Pancreas (tissue), 10 donors: ENCODE measurements at regions of chr2 and their contacts with region 1.

Region 1: DNA sequence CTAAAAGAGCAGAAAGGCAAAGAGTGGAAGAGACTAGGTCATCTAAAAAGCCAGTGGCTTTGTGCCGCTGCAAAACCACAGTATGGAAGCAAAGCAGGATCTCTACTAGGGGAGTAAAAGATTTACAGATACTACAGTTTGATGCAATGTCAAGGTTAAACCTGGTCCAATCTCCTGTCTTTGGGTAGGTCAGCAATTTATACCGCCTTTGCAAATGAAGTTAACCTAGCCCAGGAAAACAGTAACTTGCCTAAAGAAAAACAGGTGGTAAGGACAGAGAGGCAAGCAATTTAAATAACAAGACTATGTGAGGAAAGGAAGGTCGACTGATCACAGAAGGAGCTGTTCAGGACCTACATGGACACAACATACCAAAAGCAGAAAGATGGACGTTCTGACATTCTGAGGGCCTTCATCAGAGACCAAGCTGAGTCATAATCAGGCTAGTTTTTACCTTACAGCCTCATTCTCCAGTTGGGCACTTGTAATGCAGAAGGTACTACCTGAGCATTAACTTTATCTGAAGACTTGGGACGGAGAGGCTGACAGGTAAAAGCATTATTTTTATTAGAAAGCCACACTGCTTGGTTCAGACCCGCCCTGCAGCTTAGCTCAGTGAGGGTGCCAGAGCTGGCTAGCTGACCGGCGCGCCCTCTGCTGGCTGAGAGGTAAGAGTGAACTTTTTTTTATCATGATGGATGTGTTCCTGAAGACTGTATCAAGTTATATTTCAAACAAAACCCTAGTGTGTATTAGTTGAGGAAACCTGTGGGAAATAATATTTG is 15.9 kb downstream of the CDKL4 start:
- DNase-seq: peak; percentile 49 to 89 (median 76)
- ATAC-seq: peak; percentile 86 to 98 (median 96)
- H3K4me3 ChIP-seq: no peak overlapping the region
- H3K27ac ChIP-seq: no peak overlapping the region
- H3K4me1 ChIP-seq: no peaks in the 10 kb centered on the region
- H3K27me3 ChIP-seq: no peaks in the 10 kb centered on the region
- CTCF ChIP-seq: peak; percentile 64 to 85 (median 77)

Region 2: DNA sequence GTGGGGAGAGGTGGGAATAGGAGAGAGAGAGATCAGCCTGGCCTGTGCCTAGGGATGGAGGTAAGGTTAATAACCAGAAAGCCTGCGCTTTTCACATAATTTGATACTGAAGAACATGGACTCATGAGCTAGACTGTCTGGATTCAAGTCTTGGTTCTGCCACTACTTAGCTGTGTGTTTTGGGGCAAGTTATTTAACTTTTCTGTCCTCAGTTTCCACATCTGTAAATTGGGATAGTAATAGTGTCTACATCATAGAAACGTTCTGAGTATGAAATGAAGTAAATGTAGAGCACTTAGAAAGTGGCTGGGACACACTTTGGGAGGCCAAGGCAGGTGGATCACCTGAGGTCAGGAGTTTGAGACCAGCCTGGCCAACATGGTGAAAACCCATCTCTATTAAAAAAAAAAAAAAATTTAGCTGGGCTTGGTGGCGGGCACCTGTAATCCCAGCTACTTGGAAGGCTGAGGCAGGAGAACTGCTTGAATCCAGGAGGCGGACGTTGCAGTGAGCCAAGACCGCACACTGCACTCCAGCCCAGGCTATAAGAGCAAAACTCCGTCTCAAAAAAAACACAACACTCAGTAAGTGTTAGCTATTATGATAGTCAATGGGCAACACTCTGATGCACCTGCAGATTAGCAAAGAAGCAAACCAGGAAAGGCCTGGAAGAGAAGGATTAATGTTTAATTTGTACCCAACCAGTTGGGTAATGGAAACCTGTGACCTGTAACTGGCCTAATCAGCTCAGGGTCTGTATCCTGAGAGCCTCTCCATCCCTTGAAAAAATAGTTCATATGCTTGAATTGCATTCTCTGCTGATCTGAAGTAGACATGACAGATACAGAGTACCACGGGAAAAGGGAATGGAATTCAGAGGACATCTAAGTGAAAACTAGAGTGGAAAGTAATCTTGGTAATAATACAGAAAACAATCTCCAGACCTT is 555.1 kb before region 1 on chr2:
- intact Hi-C with region 1: no loop called
- DNase-seq: no peak
- ATAC-seq: no peak
- H3K4me3 ChIP-seq: no peak overlapping the region
- H3K27ac ChIP-seq: no peak overlapping the region
- H3K4me1 ChIP-seq: peaks cover 0 to 14% (median 14%) of the 10 kb centered on the region in 3 donors
- H3K27me3 ChIP-seq: no peaks in the 10 kb centered on the region
- CTCF ChIP-seq: no peak

Region 3: DNA sequence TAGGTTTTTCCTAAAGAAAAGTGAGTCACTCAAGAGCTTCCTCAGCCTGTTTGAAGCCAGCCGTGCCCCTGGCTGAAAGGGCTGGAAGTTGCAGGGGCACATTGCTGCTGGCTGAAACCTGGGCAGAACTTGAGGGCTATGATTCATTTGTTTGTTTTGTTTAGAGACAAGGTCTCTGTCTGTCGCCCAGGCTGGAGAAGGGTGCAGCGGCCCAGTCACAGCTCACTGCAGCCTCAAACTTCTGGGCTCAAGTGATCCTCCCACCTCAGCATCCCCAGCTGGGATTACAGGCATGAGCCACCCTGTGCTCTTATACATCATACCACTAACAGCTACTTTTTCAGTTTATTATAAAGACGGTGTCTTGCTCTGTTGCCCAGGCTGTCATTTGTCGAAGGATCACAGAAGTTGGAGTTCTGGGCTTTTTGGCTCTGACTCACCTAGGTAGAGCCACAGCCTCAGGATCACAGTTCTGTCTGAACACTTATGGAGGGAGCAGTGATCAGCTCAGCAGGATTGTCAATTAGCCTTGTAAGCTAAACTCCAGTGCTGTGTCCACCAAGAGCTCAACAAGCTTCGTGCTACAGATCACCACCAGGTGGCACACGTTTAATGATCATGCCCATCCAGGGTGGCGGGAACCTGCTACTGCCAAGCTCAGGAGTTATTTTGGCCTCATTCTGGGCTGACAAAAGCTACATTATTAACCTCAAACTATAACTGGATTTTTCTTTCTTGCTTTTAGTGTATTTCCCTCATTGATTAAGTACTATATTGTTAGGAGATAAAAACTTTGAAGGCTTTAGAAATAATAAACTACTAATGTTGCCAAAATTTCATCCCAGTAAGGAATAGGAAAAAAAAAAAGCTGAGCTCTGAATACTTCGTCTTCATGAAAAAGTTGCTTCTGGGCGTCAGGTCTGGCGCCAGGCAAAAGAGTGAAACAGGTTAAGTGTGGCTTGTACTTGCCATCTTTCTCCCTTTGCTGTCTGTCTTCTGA is 280.3 kb before region 1 on chr2:
- intact Hi-C with region 1: loop called in 1 of 3 experiments (anchors 5 kb)
- DNase-seq: peak; percentile 52 to 73 (median 60)
- ATAC-seq: peak; percentile 78 to 98 (median 96)
- H3K4me3 ChIP-seq: no peak overlapping the region
- H3K27ac ChIP-seq: no peak overlapping the region
- H3K4me1 ChIP-seq: no peaks in the 10 kb centered on the region
- H3K27me3 ChIP-seq: no peaks in the 10 kb centered on the region
- CTCF ChIP-seq: peak; percentile 48 to 69 (median 58)

Region 4: DNA sequence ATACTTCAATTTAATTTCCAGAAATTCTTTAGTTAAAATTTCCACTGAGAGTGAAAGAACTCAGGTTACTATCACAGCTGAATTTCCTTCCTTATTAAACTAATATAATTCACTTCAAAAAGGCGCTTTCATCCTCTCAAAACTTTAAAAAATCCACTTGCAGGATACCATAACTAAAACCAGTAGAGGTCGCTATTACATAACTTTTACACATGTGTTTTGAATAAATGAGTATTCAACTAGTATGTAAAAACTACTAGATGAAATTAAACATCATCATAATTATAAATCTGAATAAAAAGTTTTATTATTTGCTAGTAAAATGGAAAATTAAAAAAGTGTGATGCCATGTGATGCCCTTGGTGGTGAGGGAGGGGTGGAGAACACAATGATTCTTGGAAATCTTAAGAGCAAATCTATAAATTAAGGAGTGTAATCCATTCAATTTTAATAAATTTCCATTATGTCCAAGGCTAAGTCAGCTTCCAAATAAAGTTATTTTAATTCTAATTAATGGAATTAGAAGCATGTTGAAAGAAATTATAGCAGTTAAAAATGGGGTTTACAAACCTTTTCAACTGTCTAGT is 168.4 kb before region 1 on chr2:
- intact Hi-C with region 1: loop called (anchors 5 to 10 kb)
- DNase-seq: no peak
- ATAC-seq: peak in 3 of 4 donors; percentile 47 to 61 (median 48)
- H3K4me3 ChIP-seq: no peak overlapping the region
- H3K27ac ChIP-seq: no peak overlapping the region
- H3K4me1 ChIP-seq: no peaks in the 10 kb centered on the region
- H3K27me3 ChIP-seq: no peaks in the 10 kb centered on the region
- CTCF ChIP-seq: peak; percentile 10 to 58 (median 44)